Pancreas (tissue), 10 donors: ENCODE measurements at regions of chr14 and their contacts with region 1.

Region 1: GRCh38 chr14:62682208-62682607 is 363.1 kb downstream of the KCNH5 start:
- DNase-seq: no peak
- ATAC-seq: no peak
- H3K4me3 ChIP-seq: no peak overlapping the region
- H3K27ac ChIP-seq: no peak overlapping the region
- H3K4me1 ChIP-seq: no peaks in the 10 kb centered on the region
- H3K27me3 ChIP-seq: no peaks in the 10 kb centered on the region
- CTCF ChIP-seq: no peak

Region 2: DNA sequence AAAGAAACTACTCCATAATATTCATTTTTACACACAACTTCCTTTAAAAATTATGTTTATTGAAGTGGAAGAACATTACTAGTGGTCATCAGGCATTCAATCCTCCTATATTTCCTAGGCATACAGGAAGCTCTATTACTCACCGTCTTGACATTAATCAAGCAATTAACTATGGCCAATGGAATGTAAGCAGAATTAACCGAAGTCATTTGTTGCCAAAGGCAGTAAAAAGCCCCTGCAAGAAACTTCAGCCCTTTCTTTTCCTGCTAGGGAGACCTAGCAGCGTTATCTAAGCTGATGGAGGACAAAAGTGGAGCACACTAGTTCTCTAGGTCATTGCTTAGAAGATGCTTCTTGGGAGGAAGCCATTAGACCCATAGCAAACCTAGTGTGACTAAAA is 36.6 kb before region 1 on chr14:
- intact Hi-C with region 1: loop called in 1 of 3 experiments (anchors 2 kb)
- DNase-seq: no peak
- ATAC-seq: no peak
- H3K4me3 ChIP-seq: no peak overlapping the region
- H3K27ac ChIP-seq: no peak overlapping the region
- H3K4me1 ChIP-seq: no peaks in the 10 kb centered on the region
- H3K27me3 ChIP-seq: no peaks in the 10 kb centered on the region
- CTCF ChIP-seq: no peak